Left cardiac atrium (tissue), 4 donors: ENCODE measurements at regions of chr7 and their contacts with region 1.

Region 1: GRCh38 chr7:47266131-47266706 is 315.7 kb downstream of the TNS3 start:
- DNase-seq: peak; percentile 44
- ATAC-seq: peak; percentile 87 to 89

Region 2: DNA sequence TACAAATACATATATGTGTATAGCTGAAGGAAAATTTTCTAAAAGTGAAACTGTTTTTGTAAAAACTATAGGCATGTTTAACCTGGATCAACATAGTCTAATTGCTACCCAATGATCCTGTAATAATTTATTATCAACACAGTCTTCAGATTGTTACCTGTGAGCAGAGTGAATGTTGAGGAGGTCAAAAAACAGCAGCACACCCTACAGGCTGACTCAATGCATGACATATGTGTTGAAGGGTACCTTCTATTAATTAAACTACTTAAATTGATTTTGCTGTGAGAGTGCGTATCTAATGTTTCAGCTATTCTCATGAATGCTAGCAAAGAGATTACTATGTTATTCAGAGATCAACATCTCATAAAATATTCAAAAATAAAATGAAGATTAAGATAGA is 95.7 kb before region 1 on chr7:
- intact Hi-C with region 1: no loop called
- DNase-seq: no peak
- ATAC-seq: no peak

Region 3: GRCh38 chr7:47337531-47337930 is 71.3 kb after region 1 on chr7:
- intact Hi-C with region 1: loop called in 1 of 2 experiments (anchors 2 kb)
- DNase-seq: peak; percentile 44
- ATAC-seq: peak in 1 of 2 donors; percentile 35

Region 4: DNA sequence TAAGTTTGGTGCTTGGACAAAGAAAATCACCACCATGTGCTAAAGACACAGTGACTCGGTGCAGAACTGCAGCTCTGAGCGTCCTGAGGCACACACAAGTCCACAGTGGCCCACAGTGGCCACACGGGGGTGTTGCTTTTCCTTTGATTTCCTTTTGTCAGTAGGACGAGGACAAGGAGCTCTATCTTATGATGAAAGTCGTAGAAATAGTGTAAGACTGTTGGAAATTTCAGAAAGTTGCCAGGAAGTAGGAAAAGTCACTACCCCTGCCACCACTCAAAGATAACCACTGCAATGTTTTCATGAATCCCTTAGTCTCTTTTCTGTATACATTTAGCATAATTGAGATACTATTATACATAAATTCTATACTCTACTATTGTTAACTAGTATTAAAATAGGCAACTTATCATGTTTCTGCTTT is 169.7 kb after region 1 on chr7:
- intact Hi-C with region 1: loop called (anchors 5 kb)
- DNase-seq: peak; percentile 72
- ATAC-seq: peak; percentile 84 to 90

Region 5: DNA sequence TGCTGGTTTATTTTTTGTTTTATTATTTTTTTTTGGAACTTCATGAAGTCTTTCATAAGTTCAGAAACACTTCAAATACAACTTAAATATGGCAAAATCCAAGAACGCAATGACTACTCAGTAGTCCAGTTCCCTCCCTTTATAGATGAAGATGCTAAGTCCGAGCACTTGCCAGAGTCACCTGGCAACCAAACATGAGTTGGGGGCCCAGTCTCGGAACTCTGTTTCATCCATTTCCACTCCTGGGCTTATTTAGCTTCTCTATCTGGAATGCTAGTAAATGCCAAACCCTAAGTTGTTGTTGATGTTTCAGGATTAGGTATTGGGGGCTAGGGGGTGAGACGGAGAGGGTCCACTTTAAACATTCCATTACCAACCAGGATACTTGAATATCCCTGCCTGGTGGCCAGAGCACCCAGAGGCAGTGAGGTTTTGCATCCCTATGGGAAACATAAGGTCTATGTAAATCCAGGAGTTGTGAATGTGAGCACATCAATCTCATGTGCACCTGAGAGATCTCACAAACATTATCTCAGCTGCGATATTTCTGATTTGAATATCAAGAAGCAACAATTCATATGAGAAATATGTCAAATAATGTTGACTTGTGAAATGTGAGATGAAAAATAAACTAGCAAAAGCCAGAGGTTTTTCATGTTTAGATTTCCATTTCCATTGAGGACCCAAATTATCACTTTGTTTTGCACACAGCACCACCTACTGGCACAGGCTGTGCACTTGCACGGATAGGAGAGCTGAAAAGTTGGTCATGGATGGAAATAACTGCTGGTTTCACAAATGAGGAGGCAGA is 552.8 kb after region 1 on chr7:
- intact Hi-C with region 1: loop called (anchors 1 to 5 kb)
- DNase-seq: peak; percentile 67
- ATAC-seq: peak; percentile 63 to 65